CD4-positive, alpha-beta memory T cell (primary cell): ENCODE measurements at regions of chr1 and their contacts with region 1.

Region 1: DNA sequence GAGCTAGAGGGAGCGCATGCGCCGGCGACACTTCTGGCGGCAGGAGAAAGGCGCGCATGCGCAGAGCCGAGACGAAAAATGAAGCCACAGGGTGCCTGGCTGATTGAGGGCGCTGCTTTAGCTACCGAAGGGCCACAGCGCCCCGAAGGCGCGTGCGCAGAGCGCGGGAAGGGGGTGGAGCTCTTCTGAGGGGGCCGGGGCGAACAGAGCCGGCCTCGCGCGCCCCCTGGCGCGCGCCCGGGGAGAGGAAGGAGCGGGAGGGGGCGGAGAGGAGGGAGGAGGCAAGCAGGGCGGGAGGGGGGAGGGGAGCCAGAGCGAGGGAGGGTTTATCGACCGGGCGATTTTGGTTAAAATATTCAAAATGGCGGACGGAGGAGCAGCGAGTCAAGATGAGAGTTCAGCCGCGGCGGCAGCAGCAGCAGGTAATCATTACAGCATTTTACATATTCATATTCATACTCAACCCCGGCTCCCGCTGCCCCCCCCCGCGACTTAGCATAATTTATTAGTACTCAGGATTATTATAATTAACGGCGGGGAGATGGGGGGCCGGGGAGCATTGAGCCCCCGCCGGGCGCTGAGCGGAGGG is at the start of gene POU2F1:
- DNase-seq: peak; percentile 98 to 99 (median 98)
- H3K4me3 ChIP-seq: peak within 1 kb of the TSS; percentile 55 to 99
- H3K4me3 Mint-ChIP-seq: peak within 1 kb of the TSS; percentile 90 to 99 (median 94)
- H3K27ac ChIP-seq: peak within 1 kb of the TSS; percentile 90
- H3K27ac Mint-ChIP-seq: peak within 1 kb of the TSS; percentile 89 to 99 (median 97)
- H3K4me1 ChIP-seq: peaks cover 22% of the 10 kb centered on the region
- H3K4me1 Mint-ChIP-seq: peaks cover 19 to 47% (median 35%) of the 10 kb centered on the region in 4 donors
- H3K27me3 ChIP-seq: no peaks in the 10 kb centered on the region
- H3K27me3 Mint-ChIP-seq: no peaks in the 10 kb centered on the region
- total RNA-seq, gene POU2F1: 17.9 to 22.9 TPM

Region 2: GRCh38 chr1:166910396-166910994 is 310.1 kb before region 1 on chr1:
- CTCF ChIA-PET with region 1: interaction called, 12 read pairs
- POLR2A ChIA-PET with region 1: no interaction called
- intact Hi-C with region 1: loop called (anchors 1 kb)
- DNase-seq: peak; percentile 73 to 86 (median 80)
- H3K4me3 ChIP-seq: no peak overlapping the region
- H3K4me3 Mint-ChIP-seq: no peak overlapping the region
- H3K27ac ChIP-seq: no peak overlapping the region
- H3K27ac Mint-ChIP-seq: no peak overlapping the region
- H3K4me1 ChIP-seq: peaks cover 3% of the 10 kb centered on the region
- H3K4me1 Mint-ChIP-seq: peaks cover 0 to 7% (median 4%) of the 10 kb centered on the region in 4 donors
- H3K27me3 ChIP-seq: no peaks in the 10 kb centered on the region
- H3K27me3 Mint-ChIP-seq: peaks cover 0 to 5% of the 10 kb centered on the region in 2 donors

Region 3: DNA sequence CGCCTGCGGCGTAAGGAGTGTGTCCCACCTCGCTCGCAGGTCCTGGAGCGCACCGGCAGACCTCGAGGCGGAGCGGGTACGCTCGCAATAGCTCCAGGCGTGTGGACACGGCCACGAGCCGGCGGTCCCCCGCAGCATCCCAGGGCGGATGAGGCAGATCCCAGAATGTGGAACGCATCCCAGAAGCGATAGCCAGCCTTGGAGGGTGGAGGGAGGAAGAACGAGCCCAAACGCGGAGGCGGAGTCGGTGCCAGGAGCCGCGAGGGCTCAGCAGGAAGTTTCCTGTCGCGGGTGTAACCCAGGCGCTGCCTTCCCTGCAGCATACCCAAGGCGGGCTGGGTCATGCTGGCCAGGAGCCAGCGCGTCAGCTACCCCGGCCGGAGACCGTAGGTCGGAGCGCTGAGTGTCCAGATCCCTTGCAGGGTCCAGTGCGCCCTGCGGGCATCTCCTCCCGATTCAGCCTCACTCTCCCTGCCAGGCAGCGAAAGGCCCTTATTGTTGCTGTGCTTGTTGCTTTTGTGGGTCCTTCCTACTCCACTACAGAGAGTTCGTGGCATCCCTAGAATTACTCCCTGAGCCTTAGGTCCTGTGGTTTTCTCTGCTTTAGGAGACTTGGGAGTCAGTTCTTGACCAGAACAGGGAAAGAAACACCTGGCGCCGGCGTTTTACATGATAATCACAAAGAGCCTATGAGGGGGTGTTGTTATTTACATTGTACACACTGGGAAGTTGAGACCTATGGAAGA is 99.1 kb before region 1 on chr1:
- CTCF ChIA-PET with region 1: interaction called, 9 read pairs
- POLR2A ChIA-PET with region 1: interaction called, 5 read pairs
- intact Hi-C with region 1: loop called (anchors 2 kb)
- DNase-seq: peak in 4 of 5 donors; percentile 18 to 40 (median 27)
- H3K4me3 ChIP-seq: peak overlapping the region; percentile 47 to 49
- H3K4me3 Mint-ChIP-seq: peak overlapping the region; percentile 78 to 93 (median 86)
- H3K27ac ChIP-seq: no peak overlapping the region
- H3K27ac Mint-ChIP-seq: peak overlapping the region in 3 of 7 donors; percentile 22 to 60 (median 36)
- H3K4me1 ChIP-seq: peaks cover 7% of the 10 kb centered on the region
- H3K4me1 Mint-ChIP-seq: peaks cover 0 to 12% (median 3%) of the 10 kb centered on the region in 4 donors
- H3K27me3 ChIP-seq: no peaks in the 10 kb centered on the region
- H3K27me3 Mint-ChIP-seq: peaks cover 1 to 7% of the 10 kb centered on the region in 2 donors

Region 4: DNA sequence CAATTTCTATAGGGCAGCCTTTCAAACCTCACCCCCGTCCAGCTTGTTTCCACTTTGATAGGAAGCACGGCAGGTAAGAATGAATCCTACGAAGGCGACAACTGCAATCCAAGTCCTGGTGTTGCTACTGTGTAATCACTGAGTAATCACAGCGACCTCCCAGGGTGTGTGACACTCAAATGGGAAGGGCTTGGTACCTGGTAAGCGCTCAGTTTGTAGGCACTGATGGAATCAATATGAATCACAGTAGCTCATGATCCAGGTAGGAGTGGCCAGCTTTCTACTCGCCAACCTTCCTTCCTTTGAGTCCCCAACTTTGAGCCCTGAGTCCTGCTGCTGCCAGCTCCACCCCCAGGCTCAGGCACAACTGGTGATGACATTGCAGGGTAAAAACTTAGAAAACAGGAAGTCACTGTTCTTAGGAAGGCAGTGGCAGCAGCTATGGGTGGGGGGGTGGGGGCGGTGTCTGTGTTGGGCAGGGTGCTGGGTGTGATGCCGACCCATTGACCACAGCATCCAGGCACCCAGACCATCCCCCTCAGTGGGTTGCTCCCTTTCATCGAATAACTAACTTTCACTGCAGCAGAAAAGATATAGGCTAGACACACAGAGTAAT is 227.0 kb after region 1 on chr1:
- CTCF ChIA-PET with region 1: interaction called, 4 read pairs
- POLR2A ChIA-PET with region 1: interaction called, 17 read pairs
- intact Hi-C with region 1: loop called (anchors 2 kb)
- DNase-seq: peak; percentile 73 to 93 (median 76)
- H3K4me3 ChIP-seq: peak overlapping the region; percentile 7 to 34
- H3K4me3 Mint-ChIP-seq: peak overlapping the region; percentile 66 to 92 (median 82)
- H3K27ac ChIP-seq: peak overlapping the region; percentile 63
- H3K27ac Mint-ChIP-seq: peak overlapping the region; percentile 91 to 99 (median 96)
- H3K4me1 ChIP-seq: peaks cover 83% of the 10 kb centered on the region
- H3K4me1 Mint-ChIP-seq: peaks cover 59 to 93% (median 74%) of the 10 kb centered on the region in 4 donors
- H3K27me3 ChIP-seq: no peaks in the 10 kb centered on the region
- H3K27me3 Mint-ChIP-seq: no peaks in the 10 kb centered on the region

Region 5: GRCh38 chr1:167499664-167500101 is 279.1 kb after region 1 on chr1:
- CTCF ChIA-PET with region 1: no interaction called
- POLR2A ChIA-PET with region 1: no interaction called
- intact Hi-C with region 1: no loop called
- DNase-seq: peak in 1 of 5 donors; percentile 62
- H3K4me3 ChIP-seq: no peak overlapping the region
- H3K4me3 Mint-ChIP-seq: peak overlapping the region in 7 of 8 donors; percentile 26 to 88 (median 73)
- H3K27ac ChIP-seq: peak overlapping the region; percentile 32
- H3K27ac Mint-ChIP-seq: peak overlapping the region; percentile 75 to 100 (median 88)
- H3K4me1 ChIP-seq: peaks cover 100% of the 10 kb centered on the region
- H3K4me1 Mint-ChIP-seq: peaks cover 83 to 100% (median 95%) of the 10 kb centered on the region in 4 donors
- H3K27me3 ChIP-seq: no peaks in the 10 kb centered on the region
- H3K27me3 Mint-ChIP-seq: no peaks in the 10 kb centered on the region

Region 6: DNA sequence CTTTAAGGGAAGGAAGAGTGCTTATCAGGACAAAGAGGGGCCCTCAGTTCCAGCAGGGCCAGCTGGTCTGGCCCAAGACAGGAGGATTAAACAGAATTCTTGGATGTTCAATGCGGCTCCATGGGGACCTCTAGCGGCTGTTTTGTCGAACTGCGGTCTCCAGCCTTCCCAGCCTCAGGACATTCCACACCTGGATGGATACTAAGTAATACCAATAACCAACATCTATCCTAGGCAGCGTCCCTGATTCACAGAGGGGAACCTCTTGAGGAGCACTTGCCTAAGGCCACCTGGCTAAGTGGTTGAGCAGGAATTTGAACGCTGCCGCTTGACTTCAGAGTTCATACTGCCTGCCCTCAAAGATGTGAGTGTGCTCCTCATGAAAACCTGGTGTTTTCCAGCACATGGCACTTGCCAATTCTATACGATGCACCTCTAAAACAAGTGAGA is 313.2 kb after region 1 on chr1:
- CTCF ChIA-PET with region 1: interaction called, 11 read pairs
- POLR2A ChIA-PET with region 1: no interaction called
- intact Hi-C with region 1: loop called (anchors 5 kb)
- DNase-seq: peak; percentile 55 to 65 (median 60)
- H3K4me3 ChIP-seq: no peak overlapping the region
- H3K4me3 Mint-ChIP-seq: no peak overlapping the region
- H3K27ac ChIP-seq: no peak overlapping the region
- H3K27ac Mint-ChIP-seq: no peak overlapping the region
- H3K4me1 ChIP-seq: no peaks in the 10 kb centered on the region
- H3K4me1 Mint-ChIP-seq: peaks cover 3 to 4% (median 3%) of the 10 kb centered on the region in 4 donors
- H3K27me3 ChIP-seq: no peaks in the 10 kb centered on the region
- H3K27me3 Mint-ChIP-seq: no peaks in the 10 kb centered on the region

Region 7: GRCh38 chr1:167627865-167628641 is 407.4 kb after region 1 on chr1:
- CTCF ChIA-PET with region 1: interaction called, 3 read pairs
- POLR2A ChIA-PET with region 1: interaction called, 3 read pairs
- intact Hi-C with region 1: loop called (anchors 5 kb)
- DNase-seq: peak; percentile 78 to 95 (median 81)
- H3K4me3 ChIP-seq: peak overlapping the region; percentile 74 to 82
- H3K4me3 Mint-ChIP-seq: peak overlapping the region; percentile 90 to 99 (median 94)
- H3K27ac ChIP-seq: peak overlapping the region; percentile 90
- H3K27ac Mint-ChIP-seq: peak overlapping the region; percentile 94 to 99 (median 96)
- H3K4me1 ChIP-seq: peaks cover 56% of the 10 kb centered on the region
- H3K4me1 Mint-ChIP-seq: peaks cover 46 to 81% (median 54%) of the 10 kb centered on the region in 4 donors
- H3K27me3 ChIP-seq: no peaks in the 10 kb centered on the region
- H3K27me3 Mint-ChIP-seq: no peaks in the 10 kb centered on the region

Region 8: GRCh38 chr1:167803358-167804207 is 583.0 kb after region 1 on chr1:
- CTCF ChIA-PET with region 1: no interaction called
- POLR2A ChIA-PET with region 1: no interaction called
- intact Hi-C with region 1: no loop called
- DNase-seq: peak; percentile 70 to 81 (median 73)
- H3K4me3 ChIP-seq: no peak overlapping the region
- H3K4me3 Mint-ChIP-seq: peak overlapping the region in 7 of 8 donors; percentile 35 to 70 (median 57)
- H3K27ac ChIP-seq: no peak overlapping the region
- H3K27ac Mint-ChIP-seq: peak overlapping the region in 5 of 7 donors; percentile 6 to 87 (median 62)
- H3K4me1 ChIP-seq: peaks cover 26% of the 10 kb centered on the region
- H3K4me1 Mint-ChIP-seq: peaks cover 23 to 34% (median 26%) of the 10 kb centered on the region in 4 donors
- H3K27me3 ChIP-seq: no peaks in the 10 kb centered on the region
- H3K27me3 Mint-ChIP-seq: peaks cover 2% of the 10 kb centered on the region in 2 donors

Region 9: GRCh38 chr1:168178638-168179437 is 958.2 kb after region 1 on chr1 and contains the start of gene TIPRL:
- CTCF ChIA-PET with region 1: no interaction called
- POLR2A ChIA-PET with region 1: no interaction called
- intact Hi-C with region 1: loop called (anchors 2 kb)
- DNase-seq: peak; percentile 93 to 94 (median 94)
- H3K4me3 ChIP-seq: peak within 1 kb of the TSS; percentile 86 to 99
- H3K4me3 Mint-ChIP-seq: peak within 1 kb of the TSS in 2 of 8 donors; percentile 18 to 26
- H3K27ac ChIP-seq: peak within 1 kb of the TSS; percentile 95
- H3K27ac Mint-ChIP-seq: no peak within 1 kb of the TSS
- H3K4me1 ChIP-seq: peaks cover 24% of the 10 kb centered on the region
- H3K4me1 Mint-ChIP-seq: peaks cover 3 to 17% (median 9%) of the 10 kb centered on the region in 4 donors
- H3K27me3 ChIP-seq: no peaks in the 10 kb centered on the region
- H3K27me3 Mint-ChIP-seq: no peaks in the 10 kb centered on the region
- total RNA-seq, gene TIPRL: 23.8 to 28.3 TPM